Activated CD4-positive, alpha-beta T cell treated with anti-CD3 and anti-CD28 coated beads for 36 hours (primary cell): ENCODE measurements at regions of chr5 and their contacts with region 1.

Region 1: DNA sequence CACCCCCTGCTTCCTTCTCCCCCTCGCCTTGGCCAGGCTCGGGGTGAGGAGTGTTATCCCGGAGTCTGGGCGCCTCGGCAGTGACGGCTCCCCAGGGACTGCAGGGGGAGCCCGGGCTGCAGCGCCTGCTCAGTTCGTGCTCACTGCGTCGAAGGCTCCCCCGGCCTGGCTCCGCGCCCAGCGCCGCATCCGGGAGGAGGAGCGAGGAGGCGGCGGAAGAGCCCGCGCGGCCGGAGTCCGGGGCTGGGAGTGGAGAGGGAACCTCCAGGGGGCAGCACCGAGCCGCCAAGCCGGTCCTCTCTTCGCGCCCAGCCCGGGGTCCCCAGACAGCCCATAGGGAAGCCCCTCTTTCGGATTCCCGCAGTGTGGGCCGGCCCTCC is 1.3 kb upstream of the EGR1 start:
- DNase-seq: peak; percentile 97
- ATAC-seq: peak; percentile 54
- H3K4me3 Mint-ChIP-seq: peak overlapping the region; percentile 77
- H3K27ac Mint-ChIP-seq: peak overlapping the region; percentile 94
- H3K4me1 Mint-ChIP-seq: peaks cover 58% of the 10 kb centered on the region
- H3K27me3 Mint-ChIP-seq: no peaks in the 10 kb centered on the region

Region 2: GRCh38 chr5:137754126-137754960 is 709.7 kb before region 1 on chr5 and contains the start of gene HNRNPA0:
- CTCF ChIA-PET with region 1: no interaction called
- POLR2A ChIA-PET with region 1: no interaction called
- intact Hi-C with region 1: loop called in 1 of 2 experiments (anchors 1 kb)
- DNase-seq: peak; percentile 98
- ATAC-seq: peak; percentile 87
- H3K4me3 Mint-ChIP-seq: peak within 1 kb of the TSS; percentile 77
- H3K27ac Mint-ChIP-seq: peak within 1 kb of the TSS; percentile 97
- H3K4me1 Mint-ChIP-seq: peaks cover 28% of the 10 kb centered on the region
- H3K27me3 Mint-ChIP-seq: no peaks in the 10 kb centered on the region
- total RNA-seq, gene HNRNPA0: 18.9 to 32.1 TPM

Region 3: GRCh38 chr5:138213161-138214029 is 250.6 kb before region 1 on chr5 and contains the start of gene CDC23:
- CTCF ChIA-PET with region 1: no interaction called
- POLR2A ChIA-PET with region 1: no interaction called
- intact Hi-C with region 1: loop called in 1 of 2 experiments (anchors 1 kb)
- DNase-seq: peak; percentile 94
- ATAC-seq: peak; percentile 98
- H3K4me3 Mint-ChIP-seq: peak within 1 kb of the TSS; percentile 92
- H3K27ac Mint-ChIP-seq: peak within 1 kb of the TSS; percentile 94
- H3K4me1 Mint-ChIP-seq: peaks cover 16% of the 10 kb centered on the region
- H3K27me3 Mint-ChIP-seq: no peaks in the 10 kb centered on the region
- total RNA-seq, gene CDC23: 34.0 to 38.1 TPM

Region 4: DNA sequence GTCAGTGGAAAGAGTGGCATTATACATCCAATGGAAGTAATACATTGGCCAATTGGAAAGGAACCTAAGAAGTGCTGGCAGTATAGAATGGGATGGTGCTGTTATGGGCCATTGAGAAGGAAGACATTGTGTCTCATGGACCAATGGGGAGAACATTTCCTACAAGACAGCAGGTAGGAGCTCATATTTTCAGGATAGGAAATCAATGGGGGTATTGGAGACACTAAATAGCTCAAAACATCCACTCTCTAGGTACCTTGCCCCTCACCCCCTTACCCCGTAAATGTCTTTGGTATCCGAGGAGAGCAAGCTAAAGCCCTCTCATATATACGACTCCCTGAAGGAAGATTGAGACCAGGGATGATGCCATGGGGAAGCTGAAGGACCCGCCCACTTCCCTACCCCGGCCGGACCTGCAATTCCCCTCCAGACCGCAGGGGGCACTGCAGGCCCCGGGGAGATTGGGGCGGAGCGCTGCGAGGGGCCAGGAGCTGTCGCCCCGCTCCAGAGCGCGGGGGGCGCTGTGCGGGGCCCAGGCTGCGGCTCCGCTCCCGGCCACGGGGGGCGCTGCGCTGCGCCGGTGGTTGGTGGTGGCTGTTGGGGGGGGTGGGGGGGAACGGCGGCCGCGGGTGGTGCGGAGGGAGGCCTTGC is 111.8 kb before region 1 on chr5 and contains the start of gene KDM3B:
- CTCF ChIA-PET with region 1: interaction called, 3 read pairs
- POLR2A ChIA-PET with region 1: interaction called, 3 read pairs
- intact Hi-C with region 1: loop called in 1 of 2 experiments (anchors 1 kb)
- DNase-seq: peak; percentile 94
- ATAC-seq: peak; percentile 76
- H3K4me3 Mint-ChIP-seq: peak within 1 kb of the TSS; percentile 99
- H3K27ac Mint-ChIP-seq: peak within 1 kb of the TSS; percentile 96
- H3K4me1 Mint-ChIP-seq: peaks cover 44% of the 10 kb centered on the region
- H3K27me3 Mint-ChIP-seq: no peaks in the 10 kb centered on the region
- total RNA-seq, gene KDM3B: 39.0 to 40.9 TPM

Region 5: GRCh38 chr5:138491669-138492559 is 27.9 kb after region 1 on chr5:
- CTCF ChIA-PET with region 1: interaction called, 10 read pairs
- POLR2A ChIA-PET with region 1: interaction called, 8 read pairs
- intact Hi-C with region 1: loop called (anchors 1 kb)
- DNase-seq: peak; percentile 92
- ATAC-seq: peak; percentile 99
- H3K4me3 Mint-ChIP-seq: peak overlapping the region; percentile 84
- H3K27ac Mint-ChIP-seq: peak overlapping the region; percentile 79
- H3K4me1 Mint-ChIP-seq: peaks cover 15% of the 10 kb centered on the region
- H3K27me3 Mint-ChIP-seq: peaks cover 23% of the 10 kb centered on the region

Region 6: DNA sequence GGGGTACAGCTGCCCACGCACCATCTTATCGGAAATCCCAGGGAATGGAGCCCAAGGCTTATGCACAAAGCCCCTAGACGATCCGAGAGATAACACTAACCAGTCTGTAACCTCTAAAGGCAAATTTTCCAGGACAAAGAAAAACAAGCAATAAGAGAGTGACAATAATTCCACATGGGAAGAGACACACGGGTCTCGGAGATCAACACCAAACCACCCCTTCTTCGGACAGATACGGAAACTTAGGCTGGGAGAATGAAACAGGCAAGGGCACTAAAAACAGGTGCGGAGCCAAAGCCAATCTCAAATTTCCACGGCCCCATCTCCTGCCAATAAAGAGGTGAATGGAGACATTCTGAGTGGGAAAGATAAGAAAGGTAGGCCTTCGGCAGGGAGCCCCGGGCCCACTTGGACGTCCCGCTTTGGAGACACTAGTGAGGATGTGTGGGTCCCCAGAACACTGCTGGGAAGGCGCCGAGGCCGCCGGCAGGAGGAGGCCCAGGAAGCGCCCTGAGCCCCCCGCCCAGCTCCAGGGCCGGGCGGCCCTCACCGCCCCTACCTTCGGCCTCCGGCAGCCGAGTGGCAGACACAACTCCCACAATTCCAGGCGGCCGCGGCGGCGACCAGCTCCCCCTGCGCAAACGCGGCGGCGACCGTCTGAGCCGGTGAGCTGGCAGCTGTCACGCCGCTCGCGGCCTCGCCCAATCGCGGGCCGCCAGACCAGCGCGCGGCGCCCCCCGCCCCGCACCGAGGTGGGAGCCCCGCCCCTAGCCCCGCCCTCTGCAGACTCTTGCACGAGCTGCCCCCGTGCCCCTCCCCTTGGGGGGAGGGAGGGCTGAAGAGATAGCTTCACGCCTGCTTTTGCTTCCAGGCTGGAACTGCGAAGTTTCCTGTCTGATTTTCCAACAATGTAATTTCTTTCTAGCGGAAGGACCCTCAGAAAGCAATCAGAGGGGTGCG is 734.0 kb after region 1 on chr5 and contains the start of gene SIL1:
- CTCF ChIA-PET with region 1: no interaction called
- POLR2A ChIA-PET with region 1: no interaction called
- intact Hi-C with region 1: loop called in 1 of 2 experiments (anchors 10 kb)
- DNase-seq: peak; percentile 98
- ATAC-seq: peak; percentile 100
- H3K4me3 Mint-ChIP-seq: peak within 1 kb of the TSS; percentile 90
- H3K27ac Mint-ChIP-seq: peak within 1 kb of the TSS; percentile 97
- H3K4me1 Mint-ChIP-seq: peaks cover 18% of the 10 kb centered on the region
- H3K27me3 Mint-ChIP-seq: peaks cover 2% of the 10 kb centered on the region
- total RNA-seq, gene SIL1: 11.2 to 14.4 TPM

Region 7: DNA sequence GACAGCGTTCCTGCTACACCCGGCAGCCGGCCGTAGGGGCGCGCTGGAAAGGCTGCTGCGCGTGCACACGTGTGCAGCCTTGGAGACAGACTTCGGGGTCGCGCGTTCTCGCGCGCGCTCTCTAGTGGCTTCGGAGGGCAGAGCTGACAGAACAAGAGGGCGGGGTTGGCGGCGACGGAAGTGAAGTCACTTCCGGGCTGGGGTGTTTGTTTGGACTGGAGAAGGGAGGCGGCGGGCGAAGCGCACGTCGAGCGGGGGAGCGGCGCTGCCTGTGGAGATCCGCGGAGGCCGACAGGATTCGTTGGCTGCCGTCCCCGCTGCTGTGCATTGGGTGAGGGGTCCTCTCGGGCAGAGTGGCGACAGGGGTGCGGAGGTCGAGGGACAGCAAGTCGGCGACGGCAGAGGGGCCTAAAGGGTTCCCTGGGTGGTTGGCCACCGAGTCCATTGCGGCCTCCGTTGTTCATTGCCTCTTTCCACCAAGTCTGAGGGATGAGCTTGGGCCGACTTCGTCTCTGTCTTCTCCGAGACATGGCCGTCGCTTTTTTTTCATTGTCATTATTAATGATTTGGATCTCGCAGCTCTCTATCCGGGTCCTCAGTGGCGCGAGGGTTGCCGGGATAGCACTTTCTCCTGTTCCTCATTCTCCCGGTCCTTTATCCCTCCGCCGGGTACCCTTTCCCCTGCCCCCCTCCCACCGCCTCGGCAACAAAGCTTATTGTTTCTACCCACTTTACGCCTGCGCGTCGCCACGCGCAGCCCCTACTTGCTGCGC is 877.8 kb after region 1 on chr5 and contains the start of gene PAIP2:
- CTCF ChIA-PET with region 1: no interaction called
- POLR2A ChIA-PET with region 1: no interaction called
- intact Hi-C with region 1: loop called in 1 of 2 experiments (anchors 1 kb)
- DNase-seq: peak; percentile 99
- ATAC-seq: peak; percentile 88
- H3K4me3 Mint-ChIP-seq: peak within 1 kb of the TSS; percentile 88
- H3K27ac Mint-ChIP-seq: peak within 1 kb of the TSS; percentile 94
- H3K4me1 Mint-ChIP-seq: peaks cover 53% of the 10 kb centered on the region
- H3K27me3 Mint-ChIP-seq: no peaks in the 10 kb centered on the region
- total RNA-seq, gene PAIP2: 101 to 126 TPM